Activated naive CD4-positive, alpha-beta T cell treated with anti-CD3 and anti-CD28 coated beads for 36 hours (primary cell): ENCODE measurements at regions of chr19 and their contacts with region 1.

Region 1: DNA sequence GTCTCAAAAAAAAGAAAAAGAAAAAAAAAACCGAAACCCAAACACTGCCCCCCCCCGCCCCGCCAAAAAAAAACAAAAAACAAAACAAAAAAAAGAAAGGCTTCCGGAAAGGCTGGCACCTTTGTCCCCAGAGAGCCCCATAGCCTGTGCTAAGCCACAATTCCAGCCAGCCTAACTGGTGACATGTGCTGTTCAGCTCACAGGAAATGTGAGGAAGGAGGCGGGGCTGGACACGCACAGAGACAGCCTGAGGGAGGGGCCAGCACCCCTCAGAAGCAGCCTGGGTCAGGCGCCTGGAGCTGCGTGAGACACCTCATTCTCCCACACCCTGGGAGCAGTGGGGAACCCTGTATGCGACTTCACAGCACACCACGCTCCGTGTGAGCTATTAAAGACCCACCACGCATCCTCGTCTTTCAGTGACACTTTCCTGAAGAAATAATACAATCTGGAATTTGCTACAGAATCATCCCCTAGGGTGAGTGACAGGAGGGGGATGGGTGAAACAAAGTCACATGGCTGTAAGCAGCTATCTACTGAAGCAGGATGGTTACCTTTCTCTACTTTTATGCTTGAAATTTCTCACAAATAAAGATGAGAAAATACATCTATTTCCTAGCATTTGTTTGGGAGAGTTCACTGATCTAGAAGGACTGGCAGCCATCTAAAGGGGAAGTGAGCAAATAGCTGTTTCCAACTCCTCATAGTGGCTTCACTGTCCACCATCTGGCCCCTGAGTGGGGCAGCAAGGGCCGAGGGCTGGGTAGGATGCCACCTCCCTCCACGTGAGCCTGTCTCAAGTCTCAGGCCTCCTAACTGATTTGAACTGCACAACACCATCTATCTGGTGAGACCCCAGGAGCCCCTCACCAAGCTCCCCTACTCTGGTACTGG is 12.3 kb upstream of the SLC35E1 start:
- DNase-seq: peak; percentile 96
- H3K4me3 Mint-ChIP-seq: peak overlapping the region; percentile 79
- H3K27ac Mint-ChIP-seq: peak overlapping the region; percentile 82
- H3K4me1 Mint-ChIP-seq: peaks cover 79% of the 10 kb centered on the region
- H3K27me3 Mint-ChIP-seq: no peaks in the 10 kb centered on the region

Region 2: DNA sequence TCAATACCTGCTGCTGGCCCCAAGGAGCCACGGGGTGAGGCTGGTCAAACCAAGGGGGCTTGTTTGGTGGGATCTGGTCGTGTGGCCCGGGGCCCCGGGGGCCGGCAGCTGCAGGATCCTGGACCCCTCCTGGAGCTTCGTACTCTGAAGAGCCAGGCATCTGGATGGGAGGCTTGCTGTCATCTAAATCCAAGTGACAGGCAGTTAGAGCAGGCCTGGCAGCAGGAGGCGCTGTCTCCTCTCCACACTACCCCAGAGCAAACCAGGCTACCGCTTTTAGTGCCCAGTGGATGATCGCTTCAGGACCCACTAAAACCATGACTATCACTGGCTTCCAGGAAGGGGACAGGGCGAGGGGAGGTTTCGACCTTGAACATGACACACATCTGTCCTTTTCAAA is 56.4 kb before region 1 on chr19:
- CTCF ChIA-PET with region 1: no interaction called
- intact Hi-C with region 1: no loop called
- DNase-seq: peak; percentile 57
- H3K4me3 Mint-ChIP-seq: no peak overlapping the region
- H3K27ac Mint-ChIP-seq: no peak overlapping the region
- H3K4me1 Mint-ChIP-seq: no peaks in the 10 kb centered on the region
- H3K27me3 Mint-ChIP-seq: no peaks in the 10 kb centered on the region

Region 3: DNA sequence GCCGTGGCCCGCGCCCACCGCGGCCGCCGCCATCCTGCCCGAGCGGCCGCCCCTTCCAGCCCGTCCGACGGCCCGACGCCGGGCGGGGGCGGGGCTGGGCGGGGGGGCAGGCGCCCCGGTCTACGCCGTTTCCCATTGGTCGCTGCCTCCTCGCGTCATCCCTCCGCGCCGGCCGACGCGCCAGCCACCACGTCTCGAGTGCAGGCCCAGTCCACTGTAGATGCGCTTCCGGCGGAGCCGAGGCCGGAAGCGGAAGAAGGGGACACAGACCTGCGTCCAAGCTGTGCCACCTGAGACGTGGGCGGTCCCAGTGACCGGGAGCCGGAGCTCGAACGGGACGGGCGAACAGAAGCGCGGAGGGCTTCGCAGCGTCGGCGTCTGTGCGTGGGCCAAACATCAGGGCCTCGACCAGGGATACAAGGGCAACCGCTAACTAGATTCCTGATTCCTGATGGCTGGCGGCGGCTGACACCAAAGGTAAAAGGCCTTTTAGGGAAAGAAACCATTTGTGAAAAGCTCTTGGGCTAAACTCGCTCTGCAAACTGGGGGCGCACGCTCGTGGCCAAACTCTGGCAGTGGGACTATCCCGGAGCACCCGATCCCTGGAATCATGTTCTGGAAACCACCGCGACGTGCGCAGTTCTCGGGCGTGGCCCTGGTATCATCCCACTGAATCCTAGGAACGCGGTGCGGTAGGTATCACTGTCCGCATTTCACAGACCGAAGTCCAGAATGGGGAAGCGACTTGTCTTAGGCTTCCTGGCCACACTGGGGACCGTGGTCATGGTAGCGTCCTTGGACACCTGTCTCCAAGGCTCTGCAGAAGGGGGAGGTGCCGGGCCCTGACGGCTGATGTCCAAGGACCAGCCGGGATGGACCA is 11.9 kb before region 1 on chr19 and contains the start of gene SLC35E1:
- CTCF ChIA-PET with region 1: interaction called, 9 read pairs
- intact Hi-C with region 1: loop called (anchors 1 kb)
- DNase-seq: peak; percentile 93
- H3K4me3 Mint-ChIP-seq: peak within 1 kb of the TSS; percentile 93
- H3K27ac Mint-ChIP-seq: peak within 1 kb of the TSS; percentile 91
- H3K4me1 Mint-ChIP-seq: peaks cover 54% of the 10 kb centered on the region
- H3K27me3 Mint-ChIP-seq: no peaks in the 10 kb centered on the region
- total RNA-seq, gene SLC35E1: 21.7 to 22.1 TPM

Region 4: GRCh38 chr19:16608290-16608739 is 23.8 kb after region 1 on chr19:
- CTCF ChIA-PET with region 1: no interaction called
- intact Hi-C with region 1: no loop called
- DNase-seq: no peak
- H3K4me3 Mint-ChIP-seq: no peak overlapping the region
- H3K27ac Mint-ChIP-seq: peak overlapping the region; percentile 3
- H3K4me1 Mint-ChIP-seq: peaks cover 51% of the 10 kb centered on the region
- H3K27me3 Mint-ChIP-seq: no peaks in the 10 kb centered on the region